Mucosa of descending colon (tissue), 3 donors: ENCODE measurements at regions of chr10 and their contacts with region 1.

Region 1: GRCh38 chr10:44386546-44387052 is 1.7 kb upstream of the CXCL12 start:
- DNase-seq: peak in 2 of 3 donors; percentile 64 to 77
- ATAC-seq: peak; percentile 86
- H3K4me3 ChIP-seq: no peak overlapping the region
- H3K4me1 ChIP-seq: no peaks in the 10 kb centered on the region
- CTCF ChIP-seq: peak; percentile 86

Region 2: GRCh38 chr10:43689955-43690771 is 696.4 kb before region 1 on chr10:
- intact Hi-C with region 1: loop called in 1 of 2 experiments (anchors 5 kb)
- DNase-seq: peak; percentile 84 to 93 (median 90)
- ATAC-seq: peak; percentile 98
- H3K4me3 ChIP-seq: peak overlapping the region; percentile 14
- H3K4me1 ChIP-seq: peaks cover 3% of the 10 kb centered on the region
- CTCF ChIP-seq: peak; percentile 94